ENCODE measurements at regions of chr2 and their contacts with region 1.

Region 1: DNA sequence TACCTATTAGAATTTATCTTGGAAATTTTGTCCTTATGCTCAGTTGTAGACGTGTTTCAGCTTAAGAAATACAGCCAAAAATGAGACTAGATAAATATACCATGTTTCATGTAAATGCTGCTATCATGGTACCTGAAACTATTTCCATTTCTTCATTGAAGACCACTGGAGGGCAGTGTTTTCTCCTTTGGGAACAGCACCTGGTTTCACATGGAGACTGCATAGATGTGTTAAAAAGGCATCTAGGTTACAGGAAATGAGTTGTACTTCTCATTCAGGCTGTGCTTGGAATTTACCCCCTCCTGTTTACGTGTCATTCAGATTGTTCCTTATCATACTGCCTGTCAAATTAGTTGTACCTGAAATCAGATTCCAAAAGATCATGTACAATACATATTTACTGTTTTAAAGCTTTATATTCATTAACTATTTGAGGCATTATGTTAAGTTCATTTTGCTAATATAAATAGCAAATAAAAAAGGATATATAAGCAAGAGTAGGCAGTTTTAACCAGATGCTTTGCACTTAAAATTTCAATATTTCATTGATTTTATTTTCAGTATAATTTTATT is 57.3 kb upstream of the PSMD14 start:
- DNase-seq: no peak
- ATAC-seq: peak; percentile 78
- H3K4me3 ChIP-seq: no peak overlapping the region
- H3K27ac ChIP-seq: no peak overlapping the region
- H3K4me1 ChIP-seq: no peaks in the 10 kb centered on the region
- H3K27me3 ChIP-seq: no peaks in the 10 kb centered on the region
- CTCF ChIP-seq: peak; percentile 48 to 58 (median 48); a peak in 5 of 6 replicates
- EP300 ChIP-seq: no peak
- POLR2A ChIP-seq: no peak
- RAD21 ChIP-seq: peak; percentile 56

Region 2: DNA sequence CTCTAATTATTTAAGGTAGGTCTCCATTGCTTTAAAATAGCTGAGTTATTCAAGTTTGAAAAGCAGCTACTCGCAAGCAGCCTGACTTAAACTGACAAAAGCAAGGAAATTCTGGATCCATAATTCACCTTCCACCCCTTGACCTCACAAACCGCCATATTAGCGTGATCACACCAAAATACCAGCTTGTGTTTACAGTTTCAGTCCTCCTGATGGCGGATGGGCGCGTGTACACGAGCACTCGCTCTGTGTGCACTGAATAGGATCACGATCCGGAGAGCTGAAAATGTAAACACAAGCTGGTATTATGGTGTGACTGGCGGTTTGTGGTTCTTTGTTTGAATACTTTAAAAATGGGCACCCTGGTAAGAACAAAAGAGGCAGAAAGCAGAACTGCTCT is 14.9 kb after region 1 on chr2:
- CTCF ChIA-PET with region 1: interaction called, 22 read pairs
- POLR2A ChIA-PET with region 1: no interaction called
- RAD21 ChIA-PET with region 1: interaction called, 7 read pairs
- SMC1A ChIA-PET with region 1: interaction called, 10 read pairs
- in situ Hi-C with region 1: no loop called
- intact Hi-C with region 1: no loop called
- DNase-seq: no peak
- ATAC-seq: no peak
- H3K4me3 ChIP-seq: no peak overlapping the region
- H3K27ac ChIP-seq: no peak overlapping the region
- H3K4me1 ChIP-seq: no peaks in the 10 kb centered on the region
- H3K27me3 ChIP-seq: no peaks in the 10 kb centered on the region
- CTCF ChIP-seq: no peak
- EP300 ChIP-seq: no peak
- POLR2A ChIP-seq: no peak
- RAD21 ChIP-seq: no peak

Region 3: DNA sequence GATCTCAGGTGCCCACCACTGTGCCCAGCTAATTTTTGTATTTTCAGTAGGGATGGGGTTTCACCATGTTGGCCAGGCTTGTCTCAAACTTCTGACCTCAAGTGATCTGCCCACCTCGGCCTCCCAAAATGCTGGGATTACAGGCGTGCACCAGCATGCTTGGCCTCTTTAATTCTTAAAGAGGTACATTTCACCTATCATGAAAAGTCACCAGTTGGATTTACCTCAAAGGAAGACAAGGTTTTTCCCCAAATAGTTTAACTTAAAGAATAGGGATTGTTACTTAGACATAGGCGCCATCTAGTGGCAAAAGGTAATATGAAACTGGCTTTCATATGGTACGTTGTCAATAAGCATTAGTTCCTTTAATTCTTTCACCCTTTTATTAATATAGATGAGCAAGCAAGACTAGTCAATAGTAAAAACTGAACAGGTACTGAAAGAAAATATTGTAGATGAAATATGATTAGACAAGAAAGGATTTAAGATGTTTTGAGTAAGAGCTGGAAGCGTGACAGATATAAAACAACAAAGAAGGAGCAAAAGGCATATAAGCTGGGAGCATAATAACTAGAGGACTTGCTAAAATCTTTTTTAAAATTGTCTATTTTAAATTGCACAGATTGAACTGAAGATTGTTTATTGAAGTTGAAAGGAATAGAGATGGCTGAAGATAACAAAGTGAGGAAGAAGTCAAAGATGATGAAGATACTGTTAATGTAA is 22.2 kb after region 1 on chr2:
- CTCF ChIA-PET with region 1: interaction called, 26 read pairs
- POLR2A ChIA-PET with region 1: no interaction called
- RAD21 ChIA-PET with region 1: interaction called, 7 read pairs
- SMC1A ChIA-PET with region 1: interaction called, 12 read pairs
- in situ Hi-C with region 1: no loop called
- intact Hi-C with region 1: loop called (anchors 2 kb)
- DNase-seq: peak; percentile 23
- ATAC-seq: peak; percentile 90
- H3K4me3 ChIP-seq: no peak overlapping the region
- H3K27ac ChIP-seq: no peak overlapping the region
- H3K4me1 ChIP-seq: no peaks in the 10 kb centered on the region
- H3K27me3 ChIP-seq: no peaks in the 10 kb centered on the region
- CTCF ChIP-seq: peak; percentile 45 to 66 (median 57); a peak in 5 of 6 replicates
- EP300 ChIP-seq: no peak
- POLR2A ChIP-seq: no peak
- RAD21 ChIP-seq: peak; percentile 82

Region 4: GRCh38 chr2:161327582-161327981 is 76.6 kb after region 1 on chr2:
- CTCF ChIA-PET with region 1: no interaction called
- POLR2A ChIA-PET with region 1: no interaction called
- RAD21 ChIA-PET with region 1: no interaction called
- SMC1A ChIA-PET with region 1: no interaction called
- in situ Hi-C with region 1: no loop called
- intact Hi-C with region 1: no loop called
- DNase-seq: no peak
- ATAC-seq: no peak
- H3K4me3 ChIP-seq: no peak overlapping the region
- H3K27ac ChIP-seq: no peak overlapping the region
- H3K4me1 ChIP-seq: no peaks in the 10 kb centered on the region
- H3K27me3 ChIP-seq: no peaks in the 10 kb centered on the region
- CTCF ChIP-seq: no peak
- EP300 ChIP-seq: no peak
- POLR2A ChIP-seq: no peak
- RAD21 ChIP-seq: no peak

Region 5: GRCh38 chr2:162768652-162769051 is 1517.7 kb after region 1 on chr2:
- CTCF ChIA-PET with region 1: no interaction called
- POLR2A ChIA-PET with region 1: no interaction called
- RAD21 ChIA-PET with region 1: no interaction called
- SMC1A ChIA-PET with region 1: no interaction called
- in situ Hi-C with region 1: no loop called
- intact Hi-C with region 1: no loop called
- DNase-seq: no peak
- ATAC-seq: no peak
- H3K4me3 ChIP-seq: no peak overlapping the region
- H3K27ac ChIP-seq: no peak overlapping the region
- H3K4me1 ChIP-seq: no peaks in the 10 kb centered on the region
- H3K27me3 ChIP-seq: no peaks in the 10 kb centered on the region
- CTCF ChIP-seq: no peak
- EP300 ChIP-seq: no peak
- POLR2A ChIP-seq: no peak
- RAD21 ChIP-seq: no peak